ENCODE measurements at regions of chr14 and their contacts with region 1.

Region 1: DNA sequence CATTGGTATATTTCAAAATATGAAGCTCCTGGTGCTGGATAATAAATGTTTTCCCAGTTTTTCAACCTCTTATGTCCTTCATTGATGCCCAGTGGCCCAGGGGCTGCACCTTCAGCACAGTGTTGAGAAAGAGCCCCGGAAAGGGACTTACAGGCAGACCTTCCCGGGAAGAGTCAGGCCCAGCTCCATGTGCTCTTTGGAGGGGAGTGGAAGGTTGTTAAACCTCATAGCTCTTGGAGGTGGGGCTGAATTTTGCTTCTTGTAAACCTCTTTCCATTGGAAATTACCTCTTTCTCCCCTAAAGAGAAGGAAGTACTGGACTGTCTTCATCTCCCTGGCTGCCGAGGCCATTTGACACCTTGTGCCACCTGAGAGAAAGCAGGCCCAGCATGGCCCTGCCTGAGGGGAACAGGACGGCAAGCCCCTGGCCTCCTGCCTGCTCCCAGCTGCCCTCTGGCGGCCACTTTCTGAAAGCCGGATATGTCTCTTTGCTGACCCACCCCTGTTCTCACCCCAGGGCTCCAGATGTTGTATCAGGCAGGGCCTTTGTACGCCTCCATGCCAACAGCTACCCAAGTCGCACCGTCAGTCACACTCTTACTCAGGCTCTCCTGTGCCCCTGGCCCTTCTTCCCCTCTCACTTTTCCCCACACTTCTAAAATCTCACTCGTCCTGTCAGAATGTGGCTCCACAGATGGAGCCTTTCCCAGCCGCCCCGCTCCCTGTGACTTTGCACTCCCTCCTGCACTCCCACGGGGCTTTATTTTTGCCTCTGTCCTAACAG is 43.0 kb downstream of the EVL start:
- DNase-seq: peak; percentile 76 to 88 (median 84)
- ATAC-seq: peak; percentile 80
- H3K4me3 ChIP-seq: no peak overlapping the region
- H3K4me3 Mint-ChIP-seq: peak overlapping the region; percentile 13 to 93 (median 64)
- H3K27ac ChIP-seq: peak overlapping the region; percentile 83
- H3K27ac Mint-ChIP-seq: peak overlapping the region; percentile 89 to 98 (median 96)
- H3K4me1 ChIP-seq: peaks cover 49 to 74% of the 10 kb centered on the region in 2 donors
- H3K4me1 Mint-ChIP-seq: peaks cover 72 to 91% (median 82%) of the 10 kb centered on the region in 7 donors
- H3K27me3 ChIP-seq: no peaks in the 10 kb centered on the region
- H3K27me3 Mint-ChIP-seq: no peaks in the 10 kb centered on the region

Region 2: GRCh38 chr14:100056964-100057795 is 51.1 kb before region 1 on chr14:
- CTCF ChIA-PET with region 1: interaction called, 758 read pairs
- POLR2A ChIA-PET with region 1: interaction called, 2,344 read pairs
- intact Hi-C with region 1: loop called (anchors 1 kb)
- DNase-seq: peak in 7 of 9 donors; percentile 62 to 76 (median 67)
- ATAC-seq: peak; percentile 83
- H3K4me3 ChIP-seq: no peak overlapping the region
- H3K4me3 Mint-ChIP-seq: peak overlapping the region; percentile 35 to 79 (median 72)
- H3K27ac ChIP-seq: peak overlapping the region; percentile 33
- H3K27ac Mint-ChIP-seq: peak overlapping the region; percentile 83 to 96 (median 94)
- H3K4me1 ChIP-seq: peaks cover 49% of the 10 kb centered on the region in 2 donors
- H3K4me1 Mint-ChIP-seq: peaks cover 37 to 70% (median 60%) of the 10 kb centered on the region in 7 donors
- H3K27me3 ChIP-seq: no peaks in the 10 kb centered on the region
- H3K27me3 Mint-ChIP-seq: no peaks in the 10 kb centered on the region

Region 3: DNA sequence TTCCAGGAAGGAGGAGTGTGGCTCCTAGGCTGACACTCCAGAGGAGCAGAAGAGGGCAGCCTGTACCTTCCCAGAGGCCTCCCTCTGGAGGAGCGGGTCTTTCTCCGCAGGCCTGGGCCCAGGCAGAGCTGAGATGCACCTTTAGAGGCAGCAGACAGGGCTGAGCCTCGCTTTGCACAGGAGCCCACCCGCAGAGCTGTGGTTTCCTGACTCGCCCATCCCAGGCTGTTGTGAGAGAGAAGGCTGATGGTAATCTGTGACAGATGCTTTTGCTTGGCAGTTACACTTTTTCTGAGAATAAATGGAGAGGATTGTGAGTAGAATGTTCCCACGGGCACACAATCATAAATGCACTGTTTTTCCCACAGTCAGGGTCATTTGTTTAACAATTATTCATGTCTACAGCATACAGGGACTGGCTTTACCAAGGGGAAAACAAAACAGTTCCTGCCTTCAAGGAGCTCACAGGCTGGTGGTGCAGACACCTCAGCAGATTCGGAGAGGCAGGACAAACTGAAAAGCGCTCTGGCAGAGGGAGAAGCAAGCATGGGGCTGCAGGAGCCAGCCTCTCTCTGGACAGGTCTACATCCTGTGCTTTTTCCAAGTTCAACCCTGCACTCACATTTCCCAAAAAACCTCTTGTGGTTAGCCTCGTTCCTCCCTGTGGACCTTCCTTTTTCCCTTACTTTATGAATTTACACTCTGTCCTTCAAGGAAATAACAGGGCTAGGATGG is 29.1 kb before region 1 on chr14:
- CTCF ChIA-PET with region 1: interaction called, 758 read pairs
- POLR2A ChIA-PET with region 1: interaction called, 2,344 read pairs
- intact Hi-C with region 1: loop called in 1 of 2 experiments (anchors 1 kb)
- DNase-seq: peak; percentile 53 to 93 (median 90)
- ATAC-seq: peak; percentile 83
- H3K4me3 ChIP-seq: peak overlapping the region; percentile 39
- H3K4me3 Mint-ChIP-seq: peak overlapping the region; percentile 78 to 98 (median 87)
- H3K27ac ChIP-seq: peak overlapping the region; percentile 98
- H3K27ac Mint-ChIP-seq: peak overlapping the region; percentile 89 to 100 (median 98)
- H3K4me1 ChIP-seq: peaks cover 88 to 100% of the 10 kb centered on the region in 2 donors
- H3K4me1 Mint-ChIP-seq: peaks cover 83 to 99% (median 96%) of the 10 kb centered on the region in 7 donors
- H3K27me3 ChIP-seq: no peaks in the 10 kb centered on the region
- H3K27me3 Mint-ChIP-seq: no peaks in the 10 kb centered on the region

Region 4: DNA sequence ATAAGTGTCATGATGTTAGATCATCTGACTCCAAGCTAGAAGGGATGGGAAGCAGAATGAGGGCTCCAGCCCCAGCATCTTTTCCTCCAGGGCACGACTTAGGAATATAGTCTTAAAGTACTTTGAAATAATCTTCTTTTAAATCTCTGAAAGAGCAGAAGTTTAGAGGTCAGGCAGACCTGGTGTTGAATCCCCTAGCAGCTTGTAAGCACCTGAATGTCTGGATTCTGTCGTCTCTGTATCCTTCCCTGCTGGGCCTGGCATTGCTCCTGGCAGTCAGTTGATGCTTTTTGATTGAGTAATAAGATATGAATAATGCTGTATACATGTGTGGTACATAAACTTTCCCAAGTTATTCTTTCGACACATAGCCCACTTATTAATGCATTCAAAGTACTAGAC is 11.7 kb before region 1 on chr14:
- CTCF ChIA-PET with region 1: interaction called, 21 read pairs
- POLR2A ChIA-PET with region 1: interaction called, 43 read pairs
- intact Hi-C with region 1: loop called in 1 of 2 experiments (anchors 1 kb)
- DNase-seq: no peak
- ATAC-seq: no peak
- H3K4me3 ChIP-seq: no peak overlapping the region
- H3K4me3 Mint-ChIP-seq: peak overlapping the region; percentile 16 to 93 (median 69)
- H3K27ac ChIP-seq: peak overlapping the region; percentile 83
- H3K27ac Mint-ChIP-seq: peak overlapping the region; percentile 79 to 98 (median 96)
- H3K4me1 ChIP-seq: peaks cover 79 to 94% of the 10 kb centered on the region in 2 donors
- H3K4me1 Mint-ChIP-seq: peaks cover 65 to 100% (median 93%) of the 10 kb centered on the region in 7 donors
- H3K27me3 ChIP-seq: no peaks in the 10 kb centered on the region
- H3K27me3 Mint-ChIP-seq: no peaks in the 10 kb centered on the region

Region 5: DNA sequence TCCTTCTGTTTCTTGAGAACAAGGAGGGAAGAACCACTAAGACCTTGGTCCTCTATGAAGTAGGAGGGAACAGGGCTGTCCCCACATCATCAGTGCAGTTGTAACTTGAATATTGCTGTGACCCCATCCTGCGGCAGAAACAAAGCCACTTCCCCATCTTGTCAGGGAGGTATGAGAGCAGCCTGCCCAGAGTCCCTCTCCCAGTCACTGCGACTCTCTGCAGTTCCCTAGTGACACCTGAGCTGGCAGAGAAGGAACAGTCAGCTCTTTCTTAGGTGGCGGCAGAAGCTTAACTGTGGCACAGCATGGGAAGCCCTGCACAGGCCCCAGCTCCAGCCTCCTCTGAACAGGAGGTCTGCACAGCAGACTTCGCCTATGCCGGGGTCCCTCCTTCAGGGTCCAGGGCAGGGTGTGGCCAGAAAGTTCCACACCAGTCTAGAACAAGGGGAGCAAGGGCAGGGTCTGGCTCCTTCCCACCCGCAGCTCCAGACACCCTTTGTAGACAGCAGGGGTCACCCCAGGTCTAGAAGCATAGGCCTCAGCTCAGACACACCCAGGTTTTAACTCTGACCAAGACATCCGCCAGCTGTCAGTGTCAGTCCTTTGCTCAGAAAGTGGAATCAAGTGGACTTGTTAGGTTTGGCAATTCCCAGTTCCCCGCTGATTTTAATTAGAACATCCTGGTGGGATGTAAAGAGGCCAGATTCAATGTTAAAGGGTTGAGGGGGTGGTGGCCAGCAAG is 14.4 kb after region 1 on chr14:
- CTCF ChIA-PET with region 1: interaction called, 11 read pairs
- POLR2A ChIA-PET with region 1: interaction called, 4 read pairs
- intact Hi-C with region 1: loop called in 1 of 2 experiments (anchors 2 kb)
- DNase-seq: no peak
- ATAC-seq: no peak
- H3K4me3 ChIP-seq: no peak overlapping the region
- H3K4me3 Mint-ChIP-seq: no peak overlapping the region
- H3K27ac ChIP-seq: no peak overlapping the region
- H3K27ac Mint-ChIP-seq: peak overlapping the region in 7 of 9 donors; percentile 60 to 87 (median 71)
- H3K4me1 ChIP-seq: no peaks in the 10 kb centered on the region
- H3K4me1 Mint-ChIP-seq: peaks cover 18 to 38% (median 29%) of the 10 kb centered on the region in 7 donors
- H3K27me3 ChIP-seq: no peaks in the 10 kb centered on the region
- H3K27me3 Mint-ChIP-seq: no peaks in the 10 kb centered on the region

Measured in naive thymus-derived CD4-positive, alpha-beta T cell (primary cell).